ENCODE measurements at regions of chr5 and their contacts with region 1.

Region 1: DNA sequence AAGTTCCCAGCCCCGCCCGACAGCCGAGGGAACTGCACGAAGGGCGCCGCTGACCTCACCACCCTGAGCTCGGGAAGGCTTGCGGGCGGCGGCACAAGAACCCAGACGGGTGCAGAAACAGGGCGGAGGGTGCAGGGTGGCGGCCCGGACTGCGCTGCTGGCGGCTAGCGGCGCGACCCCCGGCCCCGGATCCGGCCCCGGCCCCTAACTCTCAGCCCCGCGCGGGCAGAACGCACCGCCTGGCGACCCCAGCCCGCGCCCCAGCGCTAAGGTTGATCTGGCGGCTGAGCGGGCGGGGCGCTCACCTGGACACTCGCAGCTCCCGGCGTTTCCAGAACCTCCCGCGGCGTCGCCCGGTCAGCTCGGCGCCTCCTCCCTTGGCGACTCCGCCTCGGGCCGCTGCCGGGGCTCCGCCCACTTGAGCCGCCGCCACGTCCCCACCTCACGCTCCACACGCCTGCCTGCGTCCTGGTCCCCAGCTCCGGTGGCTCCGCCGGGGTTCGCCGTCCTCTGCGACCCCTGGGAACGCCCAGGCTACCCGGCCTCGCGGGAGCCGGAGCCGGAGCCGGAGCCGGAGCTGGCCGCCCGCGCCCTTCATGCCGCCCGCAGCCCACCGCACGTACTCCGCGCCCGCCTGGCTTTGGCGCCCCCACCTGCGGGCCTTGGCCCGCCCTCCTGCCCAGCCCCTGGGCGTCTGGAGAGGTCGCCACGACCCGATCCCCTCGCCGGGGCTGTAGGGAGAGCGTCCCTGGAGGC is at the start of gene P4HA2:
- DNase-seq: peak; percentile 40
- H3K4me3 Mint-ChIP-seq: peak within 1 kb of the TSS; percentile 76
- H3K27ac Mint-ChIP-seq: no peak within 1 kb of the TSS
- H3K4me1 Mint-ChIP-seq: peaks cover 56% of the 10 kb centered on the region
- H3K27me3 Mint-ChIP-seq: peaks cover 12% of the 10 kb centered on the region
- total RNA-seq, gene P4HA2: 44.9 and 47.0 TPM in 2 replicates

Region 2: DNA sequence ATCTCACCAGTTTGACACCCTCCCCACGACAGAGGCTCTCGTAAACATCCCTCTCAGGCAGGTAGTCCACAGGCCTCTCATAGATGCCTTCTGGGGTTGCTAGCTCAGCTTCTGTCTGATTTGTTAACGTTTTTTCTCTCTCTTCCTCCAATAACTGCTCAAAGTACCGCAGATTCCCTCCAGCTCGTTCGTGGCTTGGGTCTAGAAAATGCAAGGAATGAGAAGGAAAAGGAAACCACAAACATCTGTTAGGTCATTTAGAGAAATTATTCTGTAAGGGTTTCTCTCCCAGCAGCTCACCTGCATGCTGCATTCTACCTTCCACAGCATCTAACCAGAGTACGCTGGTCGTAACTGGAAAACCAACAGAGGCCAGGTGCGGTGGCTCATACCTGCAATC is 18.5 kb before region 1 on chr5:
- intact Hi-C with region 1: loop called (anchors 2 kb)
- DNase-seq: no peak
- H3K4me3 Mint-ChIP-seq: no peak overlapping the region
- H3K27ac Mint-ChIP-seq: no peak overlapping the region
- H3K4me1 Mint-ChIP-seq: no peaks in the 10 kb centered on the region
- H3K27me3 Mint-ChIP-seq: no peaks in the 10 kb centered on the region

Region 3: GRCh38 chr5:132238169-132238744 is 10.6 kb after region 1 on chr5:
- intact Hi-C with region 1: no loop called
- DNase-seq: peak; percentile 61
- H3K4me3 Mint-ChIP-seq: no peak overlapping the region
- H3K27ac Mint-ChIP-seq: no peak overlapping the region
- H3K4me1 Mint-ChIP-seq: peaks cover 9% of the 10 kb centered on the region
- H3K27me3 Mint-ChIP-seq: peaks cover 9% of the 10 kb centered on the region

Region 4: DNA sequence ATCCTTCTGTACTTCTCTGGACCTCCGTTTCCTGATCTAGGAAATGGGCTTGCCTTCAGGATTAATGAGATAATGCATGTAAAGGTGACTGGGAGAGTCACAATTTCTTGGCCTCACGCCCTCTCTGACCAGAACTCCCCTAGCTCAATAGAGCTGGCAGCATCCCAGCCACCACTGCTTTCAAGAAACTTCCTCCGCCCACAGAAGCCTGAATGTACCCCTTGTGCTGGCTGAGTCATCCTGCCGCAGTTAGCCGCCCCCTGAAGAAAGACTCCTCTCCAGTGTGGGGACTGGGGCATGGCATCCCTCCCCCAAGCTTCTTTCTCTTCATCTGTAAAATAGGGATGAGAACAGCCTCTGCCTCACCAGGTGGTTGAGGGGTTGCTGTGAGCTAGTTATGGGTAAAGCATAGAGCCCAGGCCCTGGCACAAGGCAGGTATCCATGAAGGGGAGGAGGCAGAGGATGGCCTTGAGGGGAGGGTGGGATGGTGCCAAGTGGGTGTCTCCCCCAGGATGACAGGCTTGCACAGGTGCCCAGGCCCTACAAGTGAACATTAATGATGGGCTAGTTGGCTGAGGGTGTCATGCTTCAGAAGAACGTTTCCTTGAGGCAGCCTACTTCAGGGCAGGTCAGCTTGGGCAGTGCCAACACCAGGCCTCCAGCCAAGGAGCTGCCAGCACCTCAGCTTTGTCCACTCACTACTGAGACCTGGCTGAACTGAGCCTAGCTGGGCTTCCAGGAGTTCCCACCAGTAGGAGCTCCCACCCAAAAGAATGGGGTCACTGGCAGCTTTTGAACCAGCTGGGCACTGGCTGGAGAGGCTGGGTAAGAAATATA is 33.3 kb after region 1 on chr5:
- intact Hi-C with region 1: loop called (anchors 5 kb)
- DNase-seq: no peak
- H3K4me3 Mint-ChIP-seq: peak overlapping the region; percentile 31
- H3K27ac Mint-ChIP-seq: peak overlapping the region; percentile 64
- H3K4me1 Mint-ChIP-seq: peaks cover 50% of the 10 kb centered on the region
- H3K27me3 Mint-ChIP-seq: peaks cover 10% of the 10 kb centered on the region

Region 5: GRCh38 chr5:132354381-132355139 is 126.9 kb after region 1 on chr5:
- intact Hi-C with region 1: no loop called
- DNase-seq: no peak
- H3K4me3 Mint-ChIP-seq: no peak overlapping the region
- H3K27ac Mint-ChIP-seq: no peak overlapping the region
- H3K4me1 Mint-ChIP-seq: no peaks in the 10 kb centered on the region
- H3K27me3 Mint-ChIP-seq: peaks cover 5% of the 10 kb centered on the region

Measured in activated T-helper 2 cell treated with anti-CD3 and anti-CD28 coated beads, Interferon-gamma antibody, Interleukin-2, Interleukin-4, amounts not matched to agents 10 μg/mL and 5 μg/mL and 100 μg/mL, durations not matched to agents 14 hours and 24 hours and 36 hours (primary cell).